Naive thymus-derived CD4-positive, alpha-beta T cell (primary cell): ENCODE measurements at regions of chr2 and their contacts with region 1.

Region 1: DNA sequence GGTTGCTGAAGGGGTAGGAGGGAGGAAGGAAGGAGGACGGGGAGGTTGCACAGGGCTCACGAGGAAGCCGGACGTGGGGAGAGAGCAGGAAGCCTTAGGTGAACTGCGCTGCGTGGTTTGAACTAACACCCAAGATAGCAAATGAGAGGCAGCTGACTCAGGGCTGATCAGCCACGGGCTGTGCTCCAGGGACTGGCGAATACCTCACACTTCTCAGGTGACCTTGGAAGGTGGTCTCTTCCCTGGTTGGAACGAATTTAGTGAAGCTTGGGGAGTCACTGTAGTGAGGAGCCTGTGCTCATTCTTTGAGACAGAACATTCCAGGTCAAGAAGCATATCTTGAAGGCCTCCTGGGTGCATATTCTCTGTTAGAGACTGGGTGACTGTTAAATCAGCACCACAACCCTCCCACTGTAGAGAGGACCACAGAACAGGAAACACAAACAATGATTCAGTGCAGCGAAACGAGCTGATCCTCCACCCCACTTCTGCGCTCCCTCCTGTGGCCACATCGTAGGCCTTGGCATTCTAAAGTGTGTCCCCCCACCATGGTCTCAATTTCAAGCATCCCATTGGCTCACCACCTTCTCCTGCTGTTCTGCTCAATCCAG is 33.8 kb downstream of the TOGARAM2 start:
- DNase-seq: peak in 8 of 9 donors; percentile 33 to 75 (median 70)
- ATAC-seq: peak; percentile 75
- H3K4me3 ChIP-seq: peak overlapping the region; percentile 27
- H3K4me3 Mint-ChIP-seq: peak overlapping the region; percentile 74 to 94 (median 84)
- H3K27ac ChIP-seq: peak overlapping the region; percentile 77
- H3K27ac Mint-ChIP-seq: peak overlapping the region; percentile 94 to 100 (median 99)
- H3K4me1 ChIP-seq: peaks cover 72 to 83% of the 10 kb centered on the region in 2 donors
- H3K4me1 Mint-ChIP-seq: peaks cover 62 to 73% (median 72%) of the 10 kb centered on the region in 7 donors
- H3K27me3 ChIP-seq: no peaks in the 10 kb centered on the region
- H3K27me3 Mint-ChIP-seq: no peaks in the 10 kb centered on the region

Region 2: DNA sequence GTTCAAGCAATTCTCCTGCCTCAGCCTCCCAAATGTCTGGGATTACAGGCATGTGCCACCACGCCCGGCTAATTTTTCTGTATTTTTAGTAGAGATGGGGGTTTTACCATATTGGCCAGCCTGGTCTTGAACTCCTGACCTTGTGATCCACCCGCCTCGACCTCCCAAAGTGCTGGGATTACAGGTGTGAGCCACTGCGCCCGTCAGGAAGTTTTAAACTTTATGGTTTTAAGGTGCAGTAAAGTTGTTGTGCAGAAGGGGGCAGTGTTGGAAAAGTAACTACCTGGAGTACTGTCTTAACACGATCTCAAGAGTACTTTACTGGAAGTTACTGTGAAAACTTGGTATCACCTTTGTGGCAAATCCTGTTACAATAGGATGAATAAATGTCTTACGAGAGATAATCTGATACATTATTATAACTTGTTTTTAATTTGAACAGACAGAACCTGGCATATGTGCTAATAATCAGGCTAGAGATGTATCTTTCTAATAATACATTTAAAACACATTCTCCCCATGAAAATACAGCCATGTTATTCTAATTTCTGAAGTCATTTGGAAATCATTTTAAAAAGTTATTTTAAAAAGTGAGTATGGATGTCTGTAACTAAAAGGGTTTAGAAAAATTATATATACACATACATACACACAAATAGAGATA is 193.5 kb before region 1 on chr2:
- CTCF ChIA-PET with region 1: interaction called, 6 read pairs
- POLR2A ChIA-PET with region 1: no interaction called
- intact Hi-C with region 1: loop called in 1 of 2 experiments (anchors 5 kb)
- DNase-seq: peak in 8 of 9 donors; percentile 39 to 74 (median 60)
- ATAC-seq: peak; percentile 93
- H3K4me3 ChIP-seq: no peak overlapping the region
- H3K4me3 Mint-ChIP-seq: no peak overlapping the region
- H3K27ac ChIP-seq: no peak overlapping the region
- H3K27ac Mint-ChIP-seq: peak overlapping the region in 1 of 9 donors; percentile 7
- H3K4me1 ChIP-seq: no peaks in the 10 kb centered on the region
- H3K4me1 Mint-ChIP-seq: peaks cover 0 to 5% (median 2%) of the 10 kb centered on the region in 7 donors
- H3K27me3 ChIP-seq: no peaks in the 10 kb centered on the region
- H3K27me3 Mint-ChIP-seq: peaks cover 0 to 3% (median 0%) of the 10 kb centered on the region in 5 donors

Region 3: DNA sequence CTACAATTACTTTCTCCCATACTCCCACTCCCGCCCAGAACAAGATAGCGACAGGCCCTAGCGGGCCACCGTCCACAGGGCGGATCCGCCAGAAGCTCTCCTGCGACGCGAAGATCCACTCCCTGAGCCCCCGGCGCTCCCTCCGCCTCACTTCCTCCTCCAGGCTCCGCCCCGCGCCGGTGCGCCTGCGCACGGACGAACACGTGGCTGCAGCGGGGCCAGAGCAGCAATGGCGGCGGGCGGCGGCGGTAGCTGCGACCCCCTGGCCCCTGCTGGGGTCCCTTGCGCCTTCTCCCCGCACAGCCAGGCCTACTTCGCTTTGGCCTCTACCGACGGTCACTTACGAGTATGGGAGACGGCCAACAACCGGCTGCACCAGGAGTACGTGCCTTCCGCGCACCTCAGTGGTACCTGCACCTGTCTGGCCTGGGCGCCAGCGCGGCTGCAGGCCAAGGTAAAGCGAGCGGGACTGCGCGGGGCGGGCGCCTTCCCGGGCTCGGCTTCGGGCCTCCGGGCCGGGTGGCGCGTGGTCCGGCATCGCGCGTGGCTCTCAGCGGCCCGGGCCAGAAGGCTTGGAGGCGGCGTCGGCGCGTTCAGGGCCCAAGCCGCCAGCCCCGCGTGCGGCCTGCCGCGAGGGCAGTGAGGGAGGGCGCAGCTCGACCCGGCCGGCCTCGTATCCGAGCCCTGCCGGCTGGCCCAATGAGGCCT is 120.3 kb before region 1 on chr2 and contains the start of gene WDR43:
- CTCF ChIA-PET with region 1: no interaction called
- POLR2A ChIA-PET with region 1: interaction called, 9 read pairs
- intact Hi-C with region 1: loop called (anchors 1 to 10 kb)
- DNase-seq: peak; percentile 97 to 100 (median 99)
- ATAC-seq: peak; percentile 100
- H3K4me3 ChIP-seq: peak within 1 kb of the TSS; percentile 88
- H3K4me3 Mint-ChIP-seq: peak within 1 kb of the TSS; percentile 91 to 99 (median 98)
- H3K27ac ChIP-seq: peak within 1 kb of the TSS; percentile 78
- H3K27ac Mint-ChIP-seq: peak within 1 kb of the TSS; percentile 91 to 99 (median 94)
- H3K4me1 ChIP-seq: peaks cover 28% of the 10 kb centered on the region in 2 donors
- H3K4me1 Mint-ChIP-seq: peaks cover 31 to 49% (median 43%) of the 10 kb centered on the region in 7 donors
- H3K27me3 ChIP-seq: no peaks in the 10 kb centered on the region
- H3K27me3 Mint-ChIP-seq: peaks cover 0 to 2% (median 0%) of the 10 kb centered on the region in 5 donors
- total RNA-seq, gene WDR43: 49.6 to 75.0 (median 63.9) TPM

Region 4: DNA sequence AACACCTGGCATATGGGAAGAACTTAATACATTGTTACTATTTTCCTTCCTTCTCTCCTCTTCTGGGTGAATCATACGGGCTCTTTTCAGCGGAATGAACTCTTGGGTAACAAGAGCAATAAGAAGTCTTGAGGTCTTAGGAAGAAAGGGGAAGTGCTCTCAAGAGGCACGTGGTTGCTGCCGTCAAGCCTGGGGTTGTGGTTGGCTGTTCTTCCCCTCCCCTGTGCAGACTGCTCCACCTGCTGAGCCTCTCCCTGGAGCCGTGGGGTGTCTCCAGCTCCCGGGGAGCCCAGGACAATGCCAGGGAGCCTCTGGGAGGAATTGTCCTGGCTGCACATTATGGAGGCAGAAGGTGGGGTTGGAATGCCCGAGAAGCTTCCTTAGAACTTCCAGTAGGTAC is 14.4 kb before region 1 on chr2:
- CTCF ChIA-PET with region 1: interaction called, 5 read pairs
- POLR2A ChIA-PET with region 1: interaction called, 34 read pairs
- intact Hi-C with region 1: loop called (anchors 1 kb)
- DNase-seq: peak; percentile 31 to 75 (median 61)
- ATAC-seq: peak; percentile 95
- H3K4me3 ChIP-seq: peak overlapping the region; percentile 24
- H3K4me3 Mint-ChIP-seq: peak overlapping the region; percentile 26 to 70 (median 62)
- H3K27ac ChIP-seq: peak overlapping the region; percentile 26
- H3K27ac Mint-ChIP-seq: peak overlapping the region; percentile 39 to 92 (median 86)
- H3K4me1 ChIP-seq: peaks cover 9 to 18% of the 10 kb centered on the region in 2 donors
- H3K4me1 Mint-ChIP-seq: peaks cover 20 to 37% (median 31%) of the 10 kb centered on the region in 7 donors
- H3K27me3 ChIP-seq: no peaks in the 10 kb centered on the region
- H3K27me3 Mint-ChIP-seq: peaks cover 0 to 8% (median 0%) of the 10 kb centered on the region in 5 donors

Region 5: GRCh38 chr2:29139731-29140130 is 124.8 kb after region 1 on chr2:
- CTCF ChIA-PET with region 1: no interaction called
- POLR2A ChIA-PET with region 1: interaction called, 4 read pairs
- intact Hi-C with region 1: loop called in 1 of 2 experiments (anchors 5 kb)
- DNase-seq: no peak
- ATAC-seq: no peak
- H3K4me3 ChIP-seq: no peak overlapping the region
- H3K4me3 Mint-ChIP-seq: peak overlapping the region in 1 of 10 donors; percentile 29
- H3K27ac ChIP-seq: no peak overlapping the region
- H3K27ac Mint-ChIP-seq: peak overlapping the region in 2 of 9 donors; percentile 24 to 28
- H3K4me1 ChIP-seq: no peaks in the 10 kb centered on the region
- H3K4me1 Mint-ChIP-seq: peaks cover 9 to 45% (median 36%) of the 10 kb centered on the region in 7 donors
- H3K27me3 ChIP-seq: no peaks in the 10 kb centered on the region
- H3K27me3 Mint-ChIP-seq: no peaks in the 10 kb centered on the region

Region 6: DNA sequence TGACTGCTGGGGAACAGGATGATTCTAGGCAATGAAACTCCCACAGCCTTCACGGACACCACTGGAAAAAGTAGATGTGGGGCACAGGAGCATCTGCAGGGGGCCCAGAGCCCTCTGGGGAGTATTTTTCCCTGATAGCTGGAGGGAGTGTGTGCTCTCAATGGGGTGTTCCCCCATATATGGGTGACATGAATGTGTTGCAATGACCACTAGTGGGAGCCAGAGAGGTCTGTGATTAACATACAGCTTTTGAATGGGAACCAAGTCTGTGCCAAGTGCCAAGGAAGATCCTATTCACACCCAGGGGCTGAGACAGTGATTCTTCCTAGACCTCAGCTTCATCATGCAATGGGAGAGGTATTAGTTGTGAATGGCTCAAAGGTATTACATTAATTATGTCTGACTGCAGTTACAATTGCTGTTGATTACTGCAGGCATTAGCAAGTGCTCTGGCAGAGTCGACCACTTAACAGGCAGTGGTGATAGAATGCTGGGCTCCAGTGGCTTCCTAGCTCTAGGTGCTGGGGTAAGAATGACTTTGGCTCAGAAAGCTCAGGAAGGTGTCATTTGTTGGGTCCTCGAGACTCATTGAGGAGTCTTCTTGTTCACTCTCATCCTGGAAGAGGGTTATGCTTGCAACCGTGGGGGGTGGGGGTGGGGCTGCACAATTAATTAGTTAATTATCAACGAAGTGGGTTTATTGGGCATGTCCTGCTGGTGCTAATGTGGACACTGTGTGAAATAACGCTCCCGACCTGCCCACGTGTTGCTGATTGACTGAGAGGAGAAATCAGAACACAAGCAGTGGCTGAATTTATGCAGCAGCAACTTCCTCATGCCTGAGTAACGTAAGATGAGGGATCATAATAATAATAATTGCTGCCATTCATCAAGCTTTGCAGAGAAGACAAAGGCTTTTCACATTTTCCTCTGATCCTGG is 294.4 kb after region 1 on chr2:
- CTCF ChIA-PET with region 1: no interaction called
- POLR2A ChIA-PET with region 1: no interaction called
- intact Hi-C with region 1: loop called in 1 of 2 experiments (anchors 10 kb)
- DNase-seq: peak in 7 of 9 donors; percentile 21 to 43 (median 29)
- ATAC-seq: peak; percentile 83
- H3K4me3 ChIP-seq: no peak overlapping the region
- H3K4me3 Mint-ChIP-seq: no peak overlapping the region
- H3K27ac ChIP-seq: no peak overlapping the region
- H3K27ac Mint-ChIP-seq: no peak overlapping the region
- H3K4me1 ChIP-seq: peaks cover 1 to 4% of the 10 kb centered on the region in 2 donors
- H3K4me1 Mint-ChIP-seq: peaks cover 3 to 20% (median 10%) of the 10 kb centered on the region in 7 donors
- H3K27me3 ChIP-seq: no peaks in the 10 kb centered on the region
- H3K27me3 Mint-ChIP-seq: peaks cover 9 to 36% (median 21%) of the 10 kb centered on the region in 5 donors